ENCODE measurements at regions of chr20 and their contacts with region 1.

Region 1: DNA sequence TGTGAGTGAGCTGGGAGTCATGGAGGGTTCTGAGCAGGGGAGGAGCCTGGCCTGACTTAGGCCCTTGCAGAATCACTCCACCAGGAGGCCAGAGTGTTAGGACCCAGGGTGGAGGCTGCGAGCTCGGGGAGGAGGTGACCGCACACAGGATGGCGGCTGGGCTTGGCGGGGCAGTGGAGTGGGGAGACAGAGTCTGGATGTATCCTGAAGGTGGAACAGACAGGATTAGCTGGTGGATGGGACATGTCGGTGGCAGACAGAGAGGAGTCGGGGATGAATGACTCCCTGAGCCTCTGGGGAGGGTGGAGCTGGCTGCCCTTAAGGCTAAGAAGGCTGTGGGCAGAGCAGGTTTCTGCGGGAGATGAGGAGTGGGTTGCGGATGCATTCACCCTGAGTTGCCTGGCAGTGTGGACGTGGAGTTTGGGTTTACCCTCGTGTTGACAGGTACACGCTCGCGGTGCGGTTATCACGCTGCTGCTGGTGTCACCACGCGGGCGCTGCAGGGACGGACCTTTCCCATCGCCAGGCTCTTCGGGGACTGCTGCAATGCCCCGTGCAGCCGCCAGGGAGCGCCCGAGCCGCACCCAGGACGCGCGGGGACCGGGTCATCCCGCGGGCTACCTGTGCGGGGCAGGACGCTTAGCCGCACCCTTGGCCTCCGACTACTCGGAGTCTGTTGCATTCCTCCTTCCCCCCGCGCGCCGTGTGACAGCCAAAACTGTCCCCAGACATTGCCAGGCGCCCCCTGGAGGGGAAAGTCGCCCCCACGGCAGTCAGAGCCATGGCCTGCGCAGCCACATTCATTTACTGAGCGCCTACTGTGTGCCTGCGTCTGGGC is 43.0 kb upstream of the PTGIS start:
- DNase-seq: peak; percentile 87
- H3K4me3 ChIP-seq: peak overlapping the region in 3 of 4 donors; percentile 10 to 17 (median 16)
- H3K27ac ChIP-seq: no peak overlapping the region
- H3K4me1 ChIP-seq: peaks cover 0 to 17% (median 11%) of the 10 kb centered on the region in 4 donors
- H3K27me3 ChIP-seq: peaks cover 0 to 4% (median 0%) of the 10 kb centered on the region in 3 donors
- CTCF ChIP-seq: peak; percentile 98 to 100 (median 100)
- EP300 ChIP-seq: no peak
- POLR2A ChIP-seq: no peak

Region 2: GRCh38 chr20:49330544-49331239 is 280.2 kb before region 1 on chr20:
- intact Hi-C with region 1: loop called (anchors 5 kb)
- DNase-seq: no peak
- H3K4me3 ChIP-seq: no peak overlapping the region
- H3K27ac ChIP-seq: no peak overlapping the region
- H3K4me1 ChIP-seq: peaks cover 0 to 14% (median 11%) of the 10 kb centered on the region in 4 donors
- H3K27me3 ChIP-seq: no peaks in the 10 kb centered on the region
- CTCF ChIP-seq: no peak
- EP300 ChIP-seq: no peak
- POLR2A ChIP-seq: no peak

Region 3: DNA sequence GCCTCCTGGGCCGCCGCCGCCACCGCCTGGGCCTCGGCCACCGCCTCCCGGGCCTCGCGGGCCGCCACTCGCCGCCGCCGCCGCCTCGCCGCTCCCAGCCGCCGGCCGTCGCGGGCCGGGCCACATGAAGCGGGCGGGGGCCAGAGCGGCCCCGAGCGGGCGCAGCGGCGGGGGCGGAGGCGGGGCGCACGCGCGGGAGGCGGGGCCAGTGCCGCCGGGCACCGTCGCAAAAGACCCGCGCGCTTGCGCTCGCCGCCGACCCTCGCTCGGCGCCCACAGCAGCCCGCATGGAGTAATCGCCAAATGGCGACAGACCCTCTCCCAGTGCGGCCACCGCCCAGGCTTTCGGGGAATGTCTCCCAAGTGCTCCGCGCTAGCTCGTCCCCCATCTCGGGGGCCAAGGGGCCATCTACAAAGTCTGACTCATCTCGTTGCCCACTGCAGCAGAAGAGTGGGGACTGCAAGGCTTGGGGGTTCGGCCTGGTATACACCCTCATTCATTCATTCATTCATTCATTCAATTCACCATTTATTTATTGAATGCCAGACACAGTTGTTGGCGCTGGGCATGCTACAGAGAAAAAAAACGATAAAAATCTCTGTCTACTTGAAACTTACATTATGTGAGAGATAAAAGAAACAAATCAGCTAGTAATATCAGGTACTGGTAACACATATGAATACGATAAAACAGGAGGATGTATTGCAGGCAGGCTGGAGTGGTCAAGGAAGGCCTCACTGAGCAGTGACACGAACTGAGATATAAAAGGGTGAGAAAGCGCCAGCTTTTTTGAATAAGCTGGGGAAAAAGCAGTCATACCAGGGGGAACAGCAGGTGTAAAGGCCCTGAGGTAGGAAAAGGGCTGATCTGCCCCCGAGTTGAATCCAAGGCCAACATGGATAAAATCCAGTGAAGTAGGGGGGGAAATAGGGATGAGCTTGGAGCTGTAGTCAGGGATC is 103.1 kb after region 1 on chr20 and contains the start of gene B4GALT5:
- intact Hi-C with region 1: loop called (anchors 1 kb)
- DNase-seq: peak; percentile 82
- H3K4me3 ChIP-seq: peak within 1 kb of the TSS; percentile 80 to 98 (median 90)
- H3K27ac ChIP-seq: peak within 1 kb of the TSS; percentile 84 to 98 (median 94)
- H3K4me1 ChIP-seq: peaks cover 0 to 42% (median 32%) of the 10 kb centered on the region in 4 donors
- H3K27me3 ChIP-seq: no peaks in the 10 kb centered on the region
- CTCF ChIP-seq: no peak
- EP300 ChIP-seq: no peak
- POLR2A ChIP-seq: no peak
- total RNA-seq, gene B4GALT5: 17.4 to 33.4 (median 21.5) TPM

Region 4: DNA sequence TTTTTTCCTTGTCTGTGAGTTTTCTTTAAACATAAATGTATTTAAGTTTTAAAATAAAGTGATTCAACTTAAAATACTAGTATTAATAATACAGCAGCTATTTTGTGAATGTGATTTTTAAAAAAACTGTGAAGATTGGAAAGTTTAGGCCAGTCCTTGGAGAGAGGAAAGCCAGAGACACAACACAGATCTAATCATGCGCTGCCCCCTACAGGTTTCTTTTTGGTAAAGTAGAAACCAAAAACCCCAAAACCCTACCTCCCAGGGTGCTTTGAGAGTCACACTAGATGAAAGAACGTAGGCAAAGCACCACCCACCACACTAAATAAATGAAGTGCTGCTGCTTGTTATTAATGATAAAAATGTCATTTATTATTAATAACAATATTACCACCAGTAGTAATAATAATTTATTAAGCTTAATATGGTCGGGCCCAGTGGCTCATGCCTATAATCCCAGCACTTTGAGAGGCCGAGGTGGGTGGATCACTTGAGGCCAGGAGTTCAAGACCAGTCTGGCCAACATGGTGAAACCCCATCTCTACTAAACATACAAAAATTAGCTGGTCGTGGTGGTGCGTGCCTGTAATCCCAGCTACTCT is 235.4 kb after region 1 on chr20:
- intact Hi-C with region 1: loop called (anchors 1 kb)
- DNase-seq: no peak
- H3K4me3 ChIP-seq: no peak overlapping the region
- H3K27ac ChIP-seq: no peak overlapping the region
- H3K4me1 ChIP-seq: peaks cover 0 to 5% (median 2%) of the 10 kb centered on the region in 4 donors
- H3K27me3 ChIP-seq: no peaks in the 10 kb centered on the region
- CTCF ChIP-seq: peak; percentile 41 to 63 (median 56)
- EP300 ChIP-seq: no peak
- POLR2A ChIP-seq: no peak

Region 5: GRCh38 chr20:49928401-49929141 is 317.7 kb after region 1 on chr20:
- intact Hi-C with region 1: loop called (anchors 1 kb)
- DNase-seq: peak; percentile 91
- H3K4me3 ChIP-seq: no peak overlapping the region
- H3K27ac ChIP-seq: peak overlapping the region; percentile 43 to 63 (median 55)
- H3K4me1 ChIP-seq: peaks cover 0 to 11% (median 7%) of the 10 kb centered on the region in 4 donors
- H3K27me3 ChIP-seq: no peaks in the 10 kb centered on the region
- CTCF ChIP-seq: peak; percentile 61 to 94 (median 84)
- EP300 ChIP-seq: no peak
- POLR2A ChIP-seq: no peak